Calu3 (cell line): ENCODE measurements at regions of chr3 and their contacts with region 1.

Region 1: GRCh38 chr3:102529452-102529851 is 94.6 kb downstream of the ZPLD1 start:
- DNase-seq: peak; percentile 28
- H3K4me3 Mint-ChIP-seq: no peak overlapping the region
- H3K27ac Mint-ChIP-seq: no peak overlapping the region
- H3K4me1 Mint-ChIP-seq: no peaks in the 10 kb centered on the region
- H3K27me3 Mint-ChIP-seq: no peaks in the 10 kb centered on the region
- CTCF ChIP-seq: peak; percentile 41

Region 2: DNA sequence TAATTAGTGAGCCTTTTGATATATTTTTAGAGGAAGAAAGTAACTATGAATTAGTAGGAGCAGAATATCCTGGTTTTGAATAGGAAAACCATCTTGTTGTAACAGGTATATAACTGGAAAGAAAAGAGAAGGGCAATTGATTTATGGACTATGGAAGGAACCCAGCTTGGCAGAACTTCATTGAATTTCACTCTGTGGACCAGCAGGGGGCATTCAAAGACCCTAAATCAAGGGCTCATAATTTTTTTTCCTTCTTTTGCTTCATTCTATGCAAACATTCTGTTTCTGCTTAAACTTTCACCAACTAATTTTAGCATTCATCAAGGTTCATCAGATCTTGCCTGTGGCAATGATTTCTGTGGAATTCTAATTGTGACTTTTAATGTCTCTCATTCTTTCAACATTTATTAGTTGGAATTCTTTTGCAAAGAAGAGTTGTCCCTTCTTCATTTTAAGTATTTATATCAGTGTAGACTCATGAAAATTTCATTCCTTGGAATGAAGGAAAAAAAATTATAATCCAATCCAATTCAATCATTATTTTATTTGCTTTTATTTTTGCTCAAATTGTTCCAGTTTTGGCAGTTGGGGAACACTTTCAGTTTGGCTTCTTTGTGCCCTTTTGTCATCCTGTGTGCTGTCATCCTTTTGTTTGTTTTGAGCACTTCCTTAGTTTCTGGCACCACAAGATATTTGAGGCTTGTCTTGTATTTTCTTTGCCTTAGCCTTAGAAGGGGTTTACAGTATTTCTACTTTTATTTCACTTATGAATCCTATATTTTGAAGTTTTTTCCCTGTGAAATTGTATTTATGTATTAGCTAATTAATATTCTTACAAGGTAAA is 720.1 kb before region 1 on chr3:
- CTCF ChIA-PET with region 1: no interaction called
- intact Hi-C with region 1: loop called (anchors 5 kb)
- DNase-seq: peak; percentile 34
- H3K4me3 Mint-ChIP-seq: no peak overlapping the region
- H3K27ac Mint-ChIP-seq: no peak overlapping the region
- H3K4me1 Mint-ChIP-seq: no peaks in the 10 kb centered on the region
- H3K27me3 Mint-ChIP-seq: no peaks in the 10 kb centered on the region
- CTCF ChIP-seq: peak; percentile 47

Region 3: DNA sequence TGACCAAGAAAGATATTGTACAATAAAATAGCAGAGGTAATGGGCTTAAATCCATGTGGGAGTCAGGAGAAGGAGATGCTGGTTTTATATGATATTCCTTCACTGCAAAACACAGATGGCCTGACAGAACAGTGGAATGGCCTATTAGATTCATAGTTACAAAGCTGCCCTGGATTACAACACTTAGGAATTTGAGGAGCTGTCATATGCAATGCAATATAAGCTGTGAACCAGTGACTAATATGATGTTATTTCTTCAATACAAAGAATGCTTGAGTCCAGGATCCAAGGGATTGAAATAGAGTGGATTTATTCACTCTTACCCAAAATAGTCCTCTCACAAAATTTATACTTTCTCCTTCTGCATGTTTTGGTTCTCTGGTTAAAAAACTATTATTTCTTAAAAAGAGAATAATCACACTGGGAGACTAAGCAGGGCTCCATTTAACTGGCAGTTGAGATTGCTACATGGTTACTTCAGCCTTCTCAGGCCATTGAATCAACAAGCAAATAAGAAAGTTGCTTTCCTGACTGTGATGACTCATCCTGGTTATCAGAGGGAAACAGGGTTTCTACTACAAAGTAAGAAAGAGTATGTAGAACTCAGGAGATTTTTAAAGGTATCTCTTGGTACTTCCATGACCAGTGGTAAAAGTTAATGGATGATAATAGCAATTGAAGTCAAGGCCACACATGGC is 174.5 kb before region 1 on chr3:
- CTCF ChIA-PET with region 1: no interaction called
- intact Hi-C with region 1: loop called (anchors 10 kb)
- DNase-seq: peak; percentile 16
- H3K4me3 Mint-ChIP-seq: no peak overlapping the region
- H3K27ac Mint-ChIP-seq: peak overlapping the region; percentile 83
- H3K4me1 Mint-ChIP-seq: peaks cover 23% of the 10 kb centered on the region
- H3K27me3 Mint-ChIP-seq: no peaks in the 10 kb centered on the region
- CTCF ChIP-seq: no peak